ENCODE measurements at regions of chr12 and their contacts with region 1.

Region 1: DNA sequence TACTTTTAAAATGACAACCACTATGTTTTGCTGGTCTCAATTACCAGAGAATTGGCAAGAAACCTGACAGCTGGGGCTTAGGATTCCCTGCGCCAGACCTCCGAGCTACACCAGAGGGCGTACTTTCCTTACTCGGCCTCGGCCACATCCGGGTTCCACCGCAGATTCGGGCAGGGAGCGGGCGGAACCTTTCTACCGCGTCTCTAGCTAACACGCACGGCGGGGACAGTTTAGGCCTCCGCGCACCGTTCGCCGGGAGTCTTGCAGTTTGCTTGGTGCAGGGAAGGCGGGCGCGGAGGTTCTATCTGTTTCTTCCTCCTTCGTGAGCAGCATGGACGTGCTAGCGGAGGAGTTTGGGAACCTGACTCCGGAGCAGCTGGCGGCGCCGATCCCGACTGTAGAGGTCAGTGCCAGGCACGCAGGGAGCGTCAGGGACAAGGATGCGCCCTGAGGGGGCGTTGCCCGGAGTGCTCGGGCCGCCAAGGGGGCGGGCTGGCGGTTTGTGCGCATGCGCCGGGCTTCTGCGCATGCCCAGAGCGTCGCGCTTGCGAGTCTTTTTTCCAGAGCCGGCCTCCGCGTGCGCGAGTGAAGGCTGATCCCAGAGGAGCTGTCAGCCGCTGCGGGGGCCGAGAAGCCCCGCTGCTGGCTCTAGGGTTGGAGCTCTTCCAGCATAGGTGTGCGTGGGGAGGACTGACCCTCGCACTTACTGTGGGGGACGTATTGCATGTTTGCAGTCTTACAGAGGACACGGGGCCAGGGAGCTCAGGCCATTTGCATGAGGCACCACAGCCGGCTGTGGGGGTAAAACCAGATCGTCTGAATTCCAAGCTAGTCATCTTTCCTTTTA is at the start of gene POLR3B:
- DNase-seq: peak; percentile 97
- H3K4me3 ChIP-seq: peak within 1 kb of the TSS; percentile 19 to 79 (median 65)
- H3K27ac ChIP-seq: peak within 1 kb of the TSS; percentile 83 to 97 (median 92)
- H3K4me1 ChIP-seq: peaks cover 4 to 14% of the 10 kb centered on the region in 2 donors
- H3K27me3 ChIP-seq: no peaks in the 10 kb centered on the region
- CTCF ChIP-seq: peak; percentile 51 to 94 (median 86)
- POLR2A ChIP-seq: peak; percentile 6 to 91
- total RNA-seq, gene POLR3B: 6.0 to 13.8 (median 12.0) TPM

Region 2: GRCh38 chr12:105805735-105806399 is 551.9 kb before region 1 on chr12:
- intact Hi-C with region 1: no loop called
- DNase-seq: no peak
- H3K4me3 ChIP-seq: no peak overlapping the region
- H3K27ac ChIP-seq: no peak overlapping the region
- H3K4me1 ChIP-seq: no peaks in the 10 kb centered on the region
- H3K27me3 ChIP-seq: no peaks in the 10 kb centered on the region
- CTCF ChIP-seq: no peak
- POLR2A ChIP-seq: no peak

Region 3: DNA sequence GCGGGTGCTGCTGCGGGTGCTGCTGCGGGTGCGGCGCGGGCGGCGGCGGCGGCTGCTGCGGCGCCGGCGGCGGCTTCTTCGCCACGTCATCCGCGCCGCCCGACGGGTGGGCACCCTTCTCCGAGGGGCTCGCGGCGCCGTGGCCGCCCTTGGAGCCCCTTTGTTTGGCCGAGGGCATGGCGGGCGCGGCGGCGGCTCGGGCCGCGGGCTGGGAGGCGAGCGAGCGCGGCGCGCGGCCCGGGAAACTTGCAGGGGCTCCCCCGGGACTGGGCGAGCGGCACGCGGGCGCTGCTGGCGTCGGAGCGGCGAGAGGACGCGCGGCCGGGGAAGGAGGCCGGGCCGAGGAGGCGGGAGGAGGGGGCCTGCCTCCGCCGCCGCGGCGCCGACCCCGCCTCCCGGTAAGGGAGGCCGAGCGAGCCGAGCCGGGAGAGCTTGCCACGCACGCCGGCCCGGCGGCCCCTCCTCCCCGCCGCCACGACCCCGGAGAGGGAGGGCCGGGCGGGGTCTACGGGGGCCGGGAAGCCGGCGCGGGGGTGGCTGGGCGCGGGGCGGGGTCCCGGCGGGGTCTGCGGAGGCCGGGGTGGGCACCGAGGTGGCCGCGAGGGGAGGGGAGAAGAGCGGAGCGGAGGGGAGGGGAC is 110.0 kb before region 1 on chr12 and contains the start of gene CKAP4:
- intact Hi-C with region 1: loop called (anchors 10 kb)
- DNase-seq: peak; percentile 84
- H3K4me3 ChIP-seq: peak within 1 kb of the TSS; percentile 43 to 81 (median 77)
- H3K27ac ChIP-seq: peak within 1 kb of the TSS; percentile 94
- H3K4me1 ChIP-seq: peaks cover 14 to 26% of the 10 kb centered on the region in 2 donors
- H3K27me3 ChIP-seq: no peaks in the 10 kb centered on the region
- CTCF ChIP-seq: peak in 2 of 6 experiments; percentile 2 to 6
- POLR2A ChIP-seq: peak; percentile 62 to 86
- total RNA-seq, gene CKAP4: 40.7 to 55.5 (median 48.9) TPM